ENCODE measurements at regions of chr4 and their contacts with region 1.

Region 1: GRCh38 chr4:37970487-37971101 is 10.4 kb downstream of the PTTG2 start:
- DNase-seq: peak; percentile 72
- H3K4me3 Mint-ChIP-seq: no peak overlapping the region
- H3K27ac Mint-ChIP-seq: no peak overlapping the region
- H3K4me1 Mint-ChIP-seq: peaks cover 22% of the 10 kb centered on the region
- H3K27me3 Mint-ChIP-seq: no peaks in the 10 kb centered on the region

Region 2: DNA sequence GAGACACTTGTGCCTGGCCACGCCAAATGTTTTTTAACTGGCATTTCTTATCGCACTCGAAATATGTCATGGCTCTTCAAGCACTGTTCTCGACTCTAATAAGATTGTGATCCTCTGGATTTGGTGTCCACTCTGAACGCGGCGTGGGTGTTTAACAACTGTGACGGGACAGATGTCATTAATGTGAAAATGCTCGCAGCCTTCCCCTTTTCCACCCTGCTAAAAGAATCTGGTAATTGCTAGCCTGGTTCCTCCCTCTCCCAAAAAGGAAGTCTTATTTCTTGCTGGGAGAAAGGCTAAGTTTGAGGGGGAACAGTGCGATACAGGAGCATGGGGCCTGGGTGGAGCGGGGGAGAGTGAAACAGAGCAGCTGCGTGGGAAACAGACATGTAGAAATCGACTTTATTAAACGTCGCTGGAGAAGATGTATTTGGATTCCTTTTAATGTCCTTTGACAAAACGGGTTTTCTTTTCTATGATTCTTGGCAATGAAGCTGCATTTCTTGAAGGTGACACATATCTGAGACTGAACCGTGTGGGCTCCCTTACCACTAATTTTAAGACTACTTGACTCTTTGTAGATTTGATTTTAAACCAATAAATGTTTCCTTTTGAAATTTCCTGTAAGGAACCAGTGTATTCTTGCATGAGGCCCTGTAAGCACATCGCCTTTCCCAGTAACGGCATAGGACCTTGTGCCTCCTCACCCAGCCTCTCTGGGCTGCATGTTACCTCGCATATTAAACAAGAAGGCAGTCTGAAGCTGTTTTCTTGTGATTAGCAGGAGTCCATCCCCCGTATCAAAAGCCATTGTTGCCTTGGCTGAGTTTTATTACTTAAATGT is 61.9 kb before region 1 on chr4:
- CTCF ChIA-PET with region 1: no interaction called
- POLR2A ChIA-PET with region 1: no interaction called
- intact Hi-C with region 1: loop called (anchors 5 kb)
- DNase-seq: no peak
- H3K4me3 Mint-ChIP-seq: no peak overlapping the region
- H3K27ac Mint-ChIP-seq: no peak overlapping the region
- H3K4me1 Mint-ChIP-seq: peaks cover 25% of the 10 kb centered on the region
- H3K27me3 Mint-ChIP-seq: no peaks in the 10 kb centered on the region

Region 3: DNA sequence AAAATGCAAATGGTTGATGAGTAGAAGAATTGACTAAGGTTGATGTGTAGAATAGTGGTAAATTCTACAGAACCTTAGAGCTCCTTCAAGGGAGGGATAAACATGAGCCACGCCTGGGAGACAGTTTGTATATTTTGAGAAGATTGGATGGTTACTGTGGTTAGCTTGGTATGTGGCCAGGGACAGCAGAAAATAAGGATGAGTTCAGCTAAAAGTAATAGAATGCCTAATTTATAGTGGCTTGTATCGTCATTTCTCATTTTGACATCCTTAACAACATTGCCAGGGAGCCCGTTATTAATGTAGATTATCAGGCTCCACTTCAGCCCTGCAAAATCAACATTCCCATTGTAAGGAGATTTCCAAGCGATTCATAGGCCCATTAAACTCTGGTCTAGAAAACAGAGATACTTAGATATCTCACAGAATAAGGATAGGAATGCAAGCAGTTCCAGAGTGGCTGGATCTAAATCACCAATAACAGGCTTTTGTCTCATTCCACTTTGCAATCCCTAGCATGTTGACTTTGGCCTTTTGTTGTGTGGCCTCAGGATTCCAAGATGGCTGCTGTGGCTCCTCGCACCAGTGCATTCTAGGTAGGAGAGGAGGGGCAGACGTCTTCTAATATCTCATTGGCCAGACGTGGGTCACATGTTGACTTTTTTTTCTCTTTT is 16.8 kb before region 1 on chr4:
- CTCF ChIA-PET with region 1: interaction called, 5 read pairs
- POLR2A ChIA-PET with region 1: no interaction called
- intact Hi-C with region 1: loop called (anchors 2 kb)
- DNase-seq: no peak
- H3K4me3 Mint-ChIP-seq: no peak overlapping the region
- H3K27ac Mint-ChIP-seq: no peak overlapping the region
- H3K4me1 Mint-ChIP-seq: peaks cover 13% of the 10 kb centered on the region
- H3K27me3 Mint-ChIP-seq: no peaks in the 10 kb centered on the region

Region 4: GRCh38 chr4:38034986-38035882 is 64.6 kb after region 1 on chr4:
- CTCF ChIA-PET with region 1: interaction called, 5 read pairs
- POLR2A ChIA-PET with region 1: no interaction called
- intact Hi-C with region 1: loop called (anchors 2 kb)
- DNase-seq: no peak
- H3K4me3 Mint-ChIP-seq: no peak overlapping the region
- H3K27ac Mint-ChIP-seq: no peak overlapping the region
- H3K4me1 Mint-ChIP-seq: no peaks in the 10 kb centered on the region
- H3K27me3 Mint-ChIP-seq: no peaks in the 10 kb centered on the region

Region 5: DNA sequence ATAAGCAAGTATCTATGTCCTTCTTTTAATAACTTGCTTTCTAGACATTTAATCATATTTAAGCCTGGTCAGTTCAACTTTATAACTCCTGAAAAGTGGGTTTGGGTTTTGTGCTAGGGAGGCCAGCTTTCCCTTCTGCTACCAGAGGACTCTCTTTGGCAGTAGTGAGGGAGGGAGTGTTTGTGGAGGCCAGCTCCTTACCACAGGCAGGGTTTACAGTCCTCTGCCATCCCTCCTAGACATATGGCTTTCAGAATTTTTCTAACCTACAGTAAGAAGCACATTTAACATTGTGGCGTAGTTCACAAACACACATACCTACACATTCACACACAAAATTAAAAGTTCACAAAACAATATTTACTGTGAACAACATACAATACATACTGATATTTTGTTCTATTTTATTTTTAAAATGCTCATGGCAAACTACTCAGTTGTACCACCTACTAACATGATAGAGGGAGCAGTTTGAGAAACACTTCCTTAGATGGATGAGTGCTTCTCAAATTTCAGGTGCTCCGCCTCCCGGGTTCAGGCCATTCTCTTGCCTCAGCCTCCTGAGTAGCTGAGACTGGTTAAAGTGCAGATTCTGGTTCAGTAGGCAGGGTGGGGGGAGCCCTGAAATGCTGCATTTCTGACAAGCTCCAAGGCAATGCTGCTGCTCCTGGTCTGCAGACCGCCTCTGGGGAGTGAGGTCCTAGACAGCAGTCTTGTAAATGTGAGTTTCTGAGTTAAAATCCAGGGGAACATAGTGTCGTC is 76.3 kb after region 1 on chr4:
- CTCF ChIA-PET with region 1: no interaction called
- POLR2A ChIA-PET with region 1: no interaction called
- intact Hi-C with region 1: no loop called
- DNase-seq: no peak
- H3K4me3 Mint-ChIP-seq: no peak overlapping the region
- H3K27ac Mint-ChIP-seq: no peak overlapping the region
- H3K4me1 Mint-ChIP-seq: no peaks in the 10 kb centered on the region
- H3K27me3 Mint-ChIP-seq: no peaks in the 10 kb centered on the region